ENCODE measurements at regions of chr22 and their contacts with region 1.

Region 1: GRCh38 chr22:43088979-43089717 is at the start of gene TTLL1:
- DNase-seq: peak; percentile 83
- ATAC-seq: peak; percentile 96
- H3K4me3 Mint-ChIP-seq: peak within 1 kb of the TSS; percentile 88
- H3K27ac Mint-ChIP-seq: peak within 1 kb of the TSS; percentile 56
- H3K4me1 Mint-ChIP-seq: peaks cover 21% of the 10 kb centered on the region
- H3K27me3 Mint-ChIP-seq: no peaks in the 10 kb centered on the region
- CTCF ChIP-seq: no peak
- total RNA-seq, gene TTLL1: 1.2 and 1.5 TPM in 2 replicates

Region 2: GRCh38 chr22:42621505-42622002 is 467.6 kb before region 1 on chr22:
- CTCF ChIA-PET with region 1: interaction called, 4 read pairs
- POLR2A ChIA-PET with region 1: interaction called, 15 read pairs
- intact Hi-C with region 1: no loop called
- DNase-seq: peak; percentile 69
- ATAC-seq: peak; percentile 80
- H3K4me3 Mint-ChIP-seq: no peak overlapping the region
- H3K27ac Mint-ChIP-seq: peak overlapping the region; percentile 30
- H3K4me1 Mint-ChIP-seq: peaks cover 33% of the 10 kb centered on the region
- H3K27me3 Mint-ChIP-seq: no peaks in the 10 kb centered on the region
- CTCF ChIP-seq: peak; percentile 46

Region 3: DNA sequence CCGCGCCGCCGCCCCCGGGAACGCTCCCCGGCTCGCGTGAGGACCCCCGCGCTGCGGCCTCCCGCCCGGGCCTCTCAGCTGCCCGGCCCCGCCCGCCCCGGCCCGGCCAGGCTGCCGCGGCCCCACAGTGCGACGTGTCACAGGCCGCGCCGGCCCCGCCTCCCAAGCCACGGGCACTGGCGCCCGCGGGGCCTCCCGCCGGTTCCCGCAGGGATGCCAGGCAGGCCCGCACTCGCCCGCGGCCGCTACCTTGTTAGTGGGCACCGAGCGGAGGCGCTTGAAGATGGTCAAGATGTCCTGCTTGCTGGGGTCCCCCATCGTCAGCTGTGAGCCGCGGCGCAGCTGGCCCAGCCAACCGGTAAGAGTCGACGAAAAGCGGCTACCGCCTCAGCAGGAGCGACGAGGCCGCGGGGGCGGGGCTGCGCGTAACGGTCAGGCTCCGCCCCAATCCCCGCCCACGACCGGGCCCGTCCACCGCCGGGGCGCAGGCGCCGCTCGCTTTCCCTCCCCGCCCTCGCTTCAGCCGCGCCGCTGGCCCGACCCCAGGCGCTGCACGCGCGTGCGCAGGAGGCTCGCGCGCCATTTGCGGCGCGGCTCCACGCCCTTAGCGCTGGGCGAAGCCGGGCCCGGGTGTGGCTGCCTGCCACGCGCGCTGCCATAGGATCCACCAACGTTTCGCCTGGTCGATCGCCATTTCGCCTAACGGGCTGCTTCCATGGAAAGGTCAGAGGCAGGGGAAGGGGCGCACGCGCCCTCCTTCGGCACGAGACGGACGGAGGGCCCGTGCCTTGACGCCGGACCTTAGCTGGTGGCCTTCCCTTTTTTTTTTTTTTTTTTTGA is 232.1 kb before region 1 on chr22 and contains the start of gene ARFGAP3:
- CTCF ChIA-PET with region 1: no interaction called
- POLR2A ChIA-PET with region 1: no interaction called
- intact Hi-C with region 1: loop called (anchors 5 kb)
- DNase-seq: peak; percentile 99
- ATAC-seq: peak; percentile 93
- H3K4me3 Mint-ChIP-seq: peak within 1 kb of the TSS; percentile 86
- H3K27ac Mint-ChIP-seq: peak within 1 kb of the TSS; percentile 80
- H3K4me1 Mint-ChIP-seq: peaks cover 35% of the 10 kb centered on the region
- H3K27me3 Mint-ChIP-seq: no peaks in the 10 kb centered on the region
- CTCF ChIP-seq: no peak
- total RNA-seq, gene ARFGAP3: 35.2 and 37.3 TPM in 2 replicates

Region 4: GRCh38 chr22:43142880-43143562 is 53.9 kb after region 1 on chr22 and contains the start of gene MCAT:
- CTCF ChIA-PET with region 1: no interaction called
- POLR2A ChIA-PET with region 1: no interaction called
- intact Hi-C with region 1: loop called (anchors 2 kb)
- DNase-seq: peak; percentile 85
- ATAC-seq: peak; percentile 80
- H3K4me3 Mint-ChIP-seq: peak within 1 kb of the TSS; percentile 85
- H3K27ac Mint-ChIP-seq: peak within 1 kb of the TSS; percentile 90
- H3K4me1 Mint-ChIP-seq: peaks cover 37% of the 10 kb centered on the region
- H3K27me3 Mint-ChIP-seq: no peaks in the 10 kb centered on the region
- CTCF ChIP-seq: no peak
- total RNA-seq, gene MCAT: 12.7 and 13.2 TPM in 2 replicates

Measured in activated B cell treated with CpG ODN at 0.5 μM for 24 hours (primary cell).